ENCODE measurements at regions of chr5 and their contacts with region 1.

Region 1: GRCh38 chr5:137778772-137779564 is 24.8 kb upstream of the HNRNPA0 start:
- DNase-seq: peak in 1 of 2 experiments; percentile 64
- ATAC-seq: peak in 1 of 2 experiments; percentile 69; a peak in 3 of 6 replicates
- H3K4me3 ChIP-seq: no peak overlapping the region
- H3K27ac ChIP-seq: no peak overlapping the region
- H3K4me1 ChIP-seq: no peaks in the 10 kb centered on the region; the same call in 2 of the 3 replicates
- CTCF ChIP-seq: peak; percentile 94
- EP300 ChIP-seq: no peak
- POLR2A ChIP-seq: no peak
- RAD21 ChIP-seq: peak; percentile 88 to 92

Region 2: GRCh38 chr5:137629646-137630045 is 149.3 kb before region 1 on chr5:
- CTCF ChIA-PET with region 1: interaction called, 12 read pairs
- POLR2A ChIA-PET with region 1: no interaction called
- DNase-seq: peak; percentile 60 to 77
- ATAC-seq: peak; percentile 66 to 92
- H3K4me3 ChIP-seq: no peak overlapping the region
- H3K27ac ChIP-seq: no peak overlapping the region
- H3K4me1 ChIP-seq: no peaks in the 10 kb centered on the region
- CTCF ChIP-seq: peak; percentile 87
- EP300 ChIP-seq: no peak
- POLR2A ChIP-seq: no peak
- RAD21 ChIP-seq: peak; percentile 89 to 91

Region 3: DNA sequence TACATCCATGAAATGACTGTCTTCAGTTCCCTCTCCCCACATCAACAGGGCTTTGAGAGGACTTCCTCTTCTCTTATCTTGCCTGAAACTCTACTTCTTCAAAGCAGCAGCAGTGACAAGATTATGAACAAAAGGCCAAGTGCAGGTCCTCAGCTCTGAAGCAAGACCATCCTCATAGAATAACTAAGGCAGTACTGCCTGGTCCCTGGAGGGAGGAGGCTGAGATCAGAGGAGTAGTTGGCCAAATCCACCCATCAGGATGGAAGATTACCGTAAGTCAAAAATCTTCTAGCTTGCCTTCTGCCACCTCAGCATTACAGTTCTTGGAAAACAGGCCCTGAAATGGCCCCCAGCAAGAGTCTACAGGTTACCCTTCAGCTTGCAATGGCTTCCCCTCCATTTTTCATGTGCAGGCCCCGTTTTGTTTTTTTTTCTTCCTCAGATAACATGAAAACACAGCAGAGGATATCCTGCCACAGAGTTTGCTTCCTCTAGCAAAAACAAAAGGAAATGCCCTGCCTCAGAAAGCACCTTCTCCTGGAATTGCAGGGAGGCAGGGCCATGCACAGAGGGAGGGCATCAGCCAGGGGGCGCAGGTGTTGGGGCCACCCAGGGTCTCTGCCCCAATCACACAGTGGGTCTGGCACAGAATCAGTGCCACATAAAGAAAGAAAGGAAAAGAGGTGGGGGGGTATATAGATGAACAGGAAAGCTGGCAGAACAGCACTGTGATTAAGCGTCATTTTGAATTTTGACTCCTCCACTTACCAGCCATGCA is 83.1 kb before region 1 on chr5:
- CTCF ChIA-PET with region 1: no interaction called
- POLR2A ChIA-PET with region 1: no interaction called
- DNase-seq: no peak
- ATAC-seq: no peak
- H3K4me3 ChIP-seq: no peak overlapping the region
- H3K27ac ChIP-seq: no peak overlapping the region
- H3K4me1 ChIP-seq: no peaks in the 10 kb centered on the region
- CTCF ChIP-seq: no peak
- EP300 ChIP-seq: no peak
- POLR2A ChIP-seq: no peak
- RAD21 ChIP-seq: no peak

Region 4: DNA sequence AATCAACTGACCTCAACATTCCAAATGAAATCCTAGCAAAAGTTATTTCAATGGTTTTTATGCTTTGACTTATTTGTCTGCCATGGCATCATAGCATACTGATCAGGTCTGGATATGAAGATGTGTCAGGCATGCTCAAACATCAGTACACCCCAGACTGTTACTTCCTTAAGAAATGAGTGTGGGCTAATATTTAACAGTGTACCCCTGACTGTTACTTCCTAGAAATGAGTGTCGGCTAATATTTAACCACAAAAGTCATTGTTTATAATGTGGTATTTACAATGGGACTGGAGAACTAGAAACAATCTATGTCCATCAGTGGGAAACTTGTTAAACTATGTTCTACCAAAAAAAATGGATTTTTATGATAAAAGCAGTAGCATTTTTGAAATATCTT is 13.3 kb after region 1 on chr5:
- CTCF ChIA-PET with region 1: interaction called, 34 read pairs
- POLR2A ChIA-PET with region 1: no interaction called
- DNase-seq: peak in 1 of 2 experiments; percentile 59
- ATAC-seq: peak; percentile 76 to 94; a peak in 5 of 6 replicates
- H3K4me3 ChIP-seq: no peak overlapping the region
- H3K27ac ChIP-seq: peak overlapping the region; percentile 67 to 78
- H3K4me1 ChIP-seq: peaks cover 34% of the 10 kb centered on the region
- CTCF ChIP-seq: no peak
- EP300 ChIP-seq: no peak
- POLR2A ChIP-seq: no peak
- RAD21 ChIP-seq: no peak

Region 5: GRCh38 chr5:137815202-137815985 is 36.4 kb after region 1 on chr5:
- CTCF ChIA-PET with region 1: interaction called, 58 read pairs
- POLR2A ChIA-PET with region 1: no interaction called
- DNase-seq: no peak
- ATAC-seq: peak in 1 of 2 experiments; percentile 36; a peak in 1 of 6 replicates
- H3K4me3 ChIP-seq: no peak overlapping the region
- H3K27ac ChIP-seq: no peak overlapping the region
- H3K4me1 ChIP-seq: peaks cover 8% of the 10 kb centered on the region; the same call in 2 of the 3 replicates
- CTCF ChIP-seq: no peak
- EP300 ChIP-seq: no peak
- POLR2A ChIP-seq: no peak
- RAD21 ChIP-seq: no peak

Region 6: GRCh38 chr5:137845472-137845871 is 66.5 kb after region 1 on chr5:
- CTCF ChIA-PET with region 1: interaction called, 18 read pairs
- POLR2A ChIA-PET with region 1: no interaction called
- DNase-seq: no peak
- ATAC-seq: no peak
- H3K4me3 ChIP-seq: no peak overlapping the region
- H3K27ac ChIP-seq: no peak overlapping the region
- H3K4me1 ChIP-seq: no peaks in the 10 kb centered on the region
- CTCF ChIP-seq: no peak
- EP300 ChIP-seq: no peak
- POLR2A ChIP-seq: no peak
- RAD21 ChIP-seq: no peak

Region 7: GRCh38 chr5:138065102-138065501 is 286.1 kb after region 1 on chr5:
- CTCF ChIA-PET with region 1: interaction called, 26 read pairs
- POLR2A ChIA-PET with region 1: no interaction called
- DNase-seq: peak in 1 of 2 experiments; percentile 17
- ATAC-seq: peak; percentile 58 to 73; a peak in 4 of 6 replicates
- H3K4me3 ChIP-seq: no peak overlapping the region
- H3K27ac ChIP-seq: no peak overlapping the region
- H3K4me1 ChIP-seq: no peaks in the 10 kb centered on the region
- CTCF ChIP-seq: peak; percentile 29; the same call in 1 of the 3 replicates
- EP300 ChIP-seq: no peak
- POLR2A ChIP-seq: no peak
- RAD21 ChIP-seq: no peak; a peak in 1 of 5 replicates